Activated naive CD4-positive, alpha-beta T cell treated with anti-CD3 and anti-CD28 coated beads for 36 hours (primary cell): ENCODE measurements at regions of chr12 and their contacts with region 1.

Region 1: DNA sequence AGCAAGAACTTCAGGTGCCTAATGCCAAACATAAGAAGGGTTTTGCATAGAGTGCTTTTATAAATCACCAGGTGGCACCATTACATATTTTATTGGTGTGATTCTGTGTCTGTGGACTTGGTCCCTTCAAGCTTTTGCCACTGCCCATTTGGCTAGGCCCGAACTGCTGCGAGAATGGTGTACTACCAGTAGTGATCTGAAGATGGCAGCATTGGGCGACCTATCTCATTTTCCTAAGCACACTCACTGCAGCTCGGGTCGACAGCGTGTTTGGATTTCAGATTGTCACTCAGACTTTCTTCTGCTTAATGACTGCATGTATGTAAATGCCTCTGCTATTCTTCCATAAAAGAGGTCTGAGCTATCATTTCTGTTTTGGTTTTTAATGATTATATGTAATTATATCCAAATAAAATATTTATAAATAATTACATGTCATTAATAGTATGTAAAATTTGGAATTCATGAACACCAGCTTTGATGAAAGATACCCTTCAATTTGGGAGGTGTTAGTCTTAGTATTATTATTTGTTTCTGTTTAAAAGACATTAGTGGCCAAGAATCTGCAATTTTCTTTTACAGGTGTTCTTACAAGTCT is 78.5 kb downstream of the TPH2 start:
- DNase-seq: peak; percentile 77
- H3K4me3 Mint-ChIP-seq: no peak overlapping the region
- H3K27ac Mint-ChIP-seq: no peak overlapping the region
- H3K4me1 Mint-ChIP-seq: no peaks in the 10 kb centered on the region
- H3K27me3 Mint-ChIP-seq: peaks cover 7% of the 10 kb centered on the region

Region 2: GRCh38 chr12:71581206-71581605 is 435.9 kb before region 1 on chr12:
- CTCF ChIA-PET with region 1: no interaction called
- intact Hi-C with region 1: no loop called
- DNase-seq: no peak
- H3K4me3 Mint-ChIP-seq: no peak overlapping the region
- H3K27ac Mint-ChIP-seq: no peak overlapping the region
- H3K4me1 Mint-ChIP-seq: no peaks in the 10 kb centered on the region
- H3K27me3 Mint-ChIP-seq: no peaks in the 10 kb centered on the region

Region 3: GRCh38 chr12:71685914-71686665 is 331.1 kb before region 1 on chr12 and contains the start of gene TMEM19:
- CTCF ChIA-PET with region 1: no interaction called
- intact Hi-C with region 1: no loop called
- DNase-seq: peak; percentile 81
- H3K4me3 Mint-ChIP-seq: peak within 1 kb of the TSS; percentile 98
- H3K27ac Mint-ChIP-seq: peak within 1 kb of the TSS; percentile 96
- H3K4me1 Mint-ChIP-seq: peaks cover 27% of the 10 kb centered on the region
- H3K27me3 Mint-ChIP-seq: no peaks in the 10 kb centered on the region
- total RNA-seq, gene TMEM19: 10.9 to 11.1 TPM

Region 4: GRCh38 chr12:71780237-71780822 is 236.8 kb before region 1 on chr12:
- CTCF ChIA-PET with region 1: no interaction called
- intact Hi-C with region 1: loop called (anchors 1 kb)
- DNase-seq: peak; percentile 63
- H3K4me3 Mint-ChIP-seq: no peak overlapping the region
- H3K27ac Mint-ChIP-seq: peak overlapping the region; percentile 47
- H3K4me1 Mint-ChIP-seq: peaks cover 5% of the 10 kb centered on the region
- H3K27me3 Mint-ChIP-seq: no peaks in the 10 kb centered on the region

Region 5: GRCh38 chr12:72081777-72082176 is 64.6 kb after region 1 on chr12:
- CTCF ChIA-PET with region 1: no interaction called
- intact Hi-C with region 1: no loop called
- DNase-seq: no peak
- H3K4me3 Mint-ChIP-seq: no peak overlapping the region
- H3K27ac Mint-ChIP-seq: no peak overlapping the region
- H3K4me1 Mint-ChIP-seq: no peaks in the 10 kb centered on the region
- H3K27me3 Mint-ChIP-seq: peaks cover 11% of the 10 kb centered on the region

Region 6: GRCh38 chr12:72264548-72265175 is 247.5 kb after region 1 on chr12:
- CTCF ChIA-PET with region 1: no interaction called
- intact Hi-C with region 1: loop called (anchors 1 kb)
- DNase-seq: no peak
- H3K4me3 Mint-ChIP-seq: no peak overlapping the region
- H3K27ac Mint-ChIP-seq: no peak overlapping the region
- H3K4me1 Mint-ChIP-seq: no peaks in the 10 kb centered on the region
- H3K27me3 Mint-ChIP-seq: peaks cover 6% of the 10 kb centered on the region

Region 7: DNA sequence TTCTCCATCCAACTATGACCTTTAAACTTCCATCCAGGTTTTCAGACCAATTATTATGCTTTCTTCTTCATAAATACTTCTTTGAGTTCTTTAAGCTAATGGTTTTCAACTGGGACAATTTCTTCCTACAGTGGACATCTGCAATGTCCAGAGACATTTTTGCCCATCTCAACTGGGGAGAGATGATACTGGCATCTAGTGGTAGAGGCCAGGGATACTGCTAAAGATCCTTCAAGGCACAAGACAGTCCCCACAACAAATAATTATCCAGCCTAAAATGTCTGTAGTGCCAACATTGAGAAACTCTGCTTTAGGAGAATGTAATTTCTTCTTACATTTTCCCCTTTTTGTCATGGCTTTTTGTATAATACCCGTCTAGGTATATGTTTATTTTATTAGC is 265.6 kb after region 1 on chr12:
- CTCF ChIA-PET with region 1: no interaction called
- intact Hi-C with region 1: loop called (anchors 5 kb)
- DNase-seq: no peak
- H3K4me3 Mint-ChIP-seq: no peak overlapping the region
- H3K27ac Mint-ChIP-seq: no peak overlapping the region
- H3K4me1 Mint-ChIP-seq: no peaks in the 10 kb centered on the region
- H3K27me3 Mint-ChIP-seq: peaks cover 2% of the 10 kb centered on the region

Region 8: DNA sequence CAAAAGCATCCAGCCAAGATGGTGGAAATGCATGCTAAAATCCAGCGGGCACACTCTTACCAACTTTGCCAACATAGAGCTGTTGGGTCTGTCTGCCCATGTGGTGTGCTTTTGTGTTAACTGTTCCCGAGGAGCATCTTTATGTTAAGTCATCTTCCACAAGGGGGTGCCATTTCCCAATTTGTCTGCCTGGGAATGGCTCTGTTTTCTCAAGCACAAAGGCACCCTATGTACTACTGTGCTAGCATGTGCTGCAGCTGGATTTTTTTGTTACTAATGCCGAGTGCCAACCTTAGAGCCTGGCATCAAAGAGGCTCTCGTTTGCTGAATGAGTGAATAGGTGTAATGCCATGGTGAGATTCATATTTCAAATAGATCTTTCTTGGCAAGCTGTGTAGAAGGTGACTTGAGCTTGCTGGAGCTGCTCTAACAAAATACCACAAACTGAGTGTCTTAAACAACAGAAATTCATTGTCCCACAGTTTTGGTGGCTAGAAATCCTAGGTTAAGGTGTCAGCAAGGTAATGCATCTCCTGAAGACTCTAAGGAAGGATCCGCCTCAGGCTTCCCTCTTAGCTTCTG is 329.3 kb after region 1 on chr12:
- CTCF ChIA-PET with region 1: interaction called, 3 read pairs
- intact Hi-C with region 1: loop called (anchors 2 kb)
- DNase-seq: peak; percentile 68
- H3K4me3 Mint-ChIP-seq: no peak overlapping the region
- H3K27ac Mint-ChIP-seq: no peak overlapping the region
- H3K4me1 Mint-ChIP-seq: no peaks in the 10 kb centered on the region
- H3K27me3 Mint-ChIP-seq: no peaks in the 10 kb centered on the region